ENCODE measurements at regions of chr1 and their contacts with region 1.

Region 1: DNA sequence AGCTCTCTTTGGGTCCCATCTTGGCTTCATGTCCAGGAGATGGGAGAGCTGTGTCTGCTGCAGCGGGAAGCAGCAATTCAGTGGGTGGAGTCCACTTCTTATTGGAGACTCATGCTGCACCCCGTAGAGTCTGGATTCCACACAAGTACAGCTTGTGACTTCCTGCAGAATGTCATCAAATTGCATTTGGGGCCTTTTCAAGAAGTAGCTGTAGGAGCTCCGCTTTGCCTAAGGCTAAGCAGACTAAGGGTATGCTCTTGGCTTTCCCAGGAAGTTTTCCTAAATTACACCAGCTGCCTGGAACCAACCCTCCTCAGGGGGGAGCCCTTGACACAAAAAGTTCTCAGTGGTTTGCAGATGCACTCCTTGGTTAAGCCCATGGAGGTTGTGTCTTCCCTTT is 5.7 kb upstream of the MOB3C start:
- DNase-seq: no peak
- ATAC-seq: peak; percentile 64
- H3K4me3 ChIP-seq: no peak overlapping the region
- H3K27ac ChIP-seq: no peak overlapping the region
- H3K4me1 ChIP-seq: peaks cover 7% of the 10 kb centered on the region; the same call in 1 of the 2 replicates
- H3K27me3 ChIP-seq: no peaks in the 10 kb centered on the region
- CTCF ChIP-seq: no peak; the same call in 1 of the 2 replicates

Region 2: DNA sequence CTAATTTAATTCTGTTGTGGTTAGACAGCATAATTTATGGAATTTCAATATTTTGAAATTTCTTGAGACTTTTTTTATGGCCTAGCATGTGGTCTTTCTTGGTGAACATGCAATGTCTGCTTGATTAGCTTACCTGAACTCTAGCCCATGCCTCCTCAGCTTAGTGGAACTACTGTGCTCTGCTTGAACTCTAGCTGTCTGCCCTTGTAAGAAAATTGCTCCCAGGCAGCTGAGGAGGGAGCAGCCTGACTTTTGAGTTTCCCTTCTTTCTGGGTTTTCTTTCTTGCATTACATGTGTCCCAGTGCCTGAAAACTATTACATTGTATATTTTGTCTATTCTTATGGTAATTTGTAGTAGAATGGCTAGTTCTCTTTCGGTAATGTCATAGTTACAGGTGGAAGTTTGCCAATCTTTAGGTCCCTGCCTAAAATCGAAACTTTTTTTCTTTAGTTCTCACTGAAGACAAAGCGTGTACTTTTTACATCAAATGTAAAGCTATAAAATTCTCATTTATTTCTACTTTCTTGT is 713.7 kb before region 1 on chr1:
- CTCF ChIA-PET with region 1: no interaction called
- POLR2A ChIA-PET with region 1: no interaction called
- in situ Hi-C with region 1: no loop called
- intact Hi-C with region 1: no loop called
- DNase-seq: no peak
- ATAC-seq: no peak; the same call in 1 of the 2 replicates
- H3K4me3 ChIP-seq: no peak overlapping the region
- H3K27ac ChIP-seq: peak overlapping the region; percentile 48; the same call in 1 of the 2 replicates
- H3K4me1 ChIP-seq: peaks cover 12% of the 10 kb centered on the region; the same call in 1 of the 2 replicates
- H3K27me3 ChIP-seq: no peaks in the 10 kb centered on the region
- CTCF ChIP-seq: no peak

Region 3: GRCh38 chr1:46667782-46668760 is 45.7 kb after region 1 on chr1 and contains the start of gene ATPAF1:
- CTCF ChIA-PET with region 1: no interaction called
- POLR2A ChIA-PET with region 1: no interaction called
- in situ Hi-C with region 1: no loop called
- intact Hi-C with region 1: no loop called
- DNase-seq: peak; percentile 33
- ATAC-seq: peak; percentile 91
- H3K4me3 ChIP-seq: peak within 1 kb of the TSS; percentile 65 to 94
- H3K27ac ChIP-seq: peak within 1 kb of the TSS; percentile 88
- H3K4me1 ChIP-seq: peaks cover 11% of the 10 kb centered on the region; the same call in 1 of the 2 replicates
- H3K27me3 ChIP-seq: no peaks in the 10 kb centered on the region
- CTCF ChIP-seq: no peak
- total RNA-seq, gene ATPAF1: 39.0 TPM

Region 4: GRCh38 chr1:46724991-46725735 is 102.8 kb after region 1 on chr1:
- CTCF ChIA-PET with region 1: interaction called, 3 read pairs
- POLR2A ChIA-PET with region 1: no interaction called
- in situ Hi-C with region 1: no loop called
- intact Hi-C with region 1: loop called (anchors 2 kb)
- DNase-seq: peak; percentile 77
- ATAC-seq: peak; percentile 97
- H3K4me3 ChIP-seq: no peak overlapping the region
- H3K27ac ChIP-seq: no peak overlapping the region
- H3K4me1 ChIP-seq: peaks cover 3% of the 10 kb centered on the region; the same call in 1 of the 2 replicates
- H3K27me3 ChIP-seq: no peaks in the 10 kb centered on the region; the same call in 1 of the 2 replicates
- CTCF ChIP-seq: peak; percentile 94